CD8-positive, alpha-beta T cell (primary cell): ENCODE measurements at regions of chr22 and their contacts with region 1.

Region 1: GRCh38 chr22:50582562-50583293 is at the start of gene CHKB:
- DNase-seq: peak; percentile 95 to 99 (median 98)
- ATAC-seq: peak; percentile 94
- H3K4me3 ChIP-seq: peak within 1 kb of the TSS; percentile 77 to 78
- H3K4me3 Mint-ChIP-seq: peak within 1 kb of the TSS; percentile 93
- H3K27ac ChIP-seq: peak within 1 kb of the TSS; percentile 93 to 94
- H3K27ac Mint-ChIP-seq: peak within 1 kb of the TSS; percentile 97
- H3K4me1 ChIP-seq: peaks cover 16% of the 10 kb centered on the region
- H3K4me1 Mint-ChIP-seq: peaks cover 30% of the 10 kb centered on the region
- H3K27me3 ChIP-seq: no peaks in the 10 kb centered on the region
- H3K27me3 Mint-ChIP-seq: no peaks in the 10 kb centered on the region
- CTCF ChIP-seq: no peak
- total RNA-seq, gene CHKB: 112 to 115 TPM

Region 2: DNA sequence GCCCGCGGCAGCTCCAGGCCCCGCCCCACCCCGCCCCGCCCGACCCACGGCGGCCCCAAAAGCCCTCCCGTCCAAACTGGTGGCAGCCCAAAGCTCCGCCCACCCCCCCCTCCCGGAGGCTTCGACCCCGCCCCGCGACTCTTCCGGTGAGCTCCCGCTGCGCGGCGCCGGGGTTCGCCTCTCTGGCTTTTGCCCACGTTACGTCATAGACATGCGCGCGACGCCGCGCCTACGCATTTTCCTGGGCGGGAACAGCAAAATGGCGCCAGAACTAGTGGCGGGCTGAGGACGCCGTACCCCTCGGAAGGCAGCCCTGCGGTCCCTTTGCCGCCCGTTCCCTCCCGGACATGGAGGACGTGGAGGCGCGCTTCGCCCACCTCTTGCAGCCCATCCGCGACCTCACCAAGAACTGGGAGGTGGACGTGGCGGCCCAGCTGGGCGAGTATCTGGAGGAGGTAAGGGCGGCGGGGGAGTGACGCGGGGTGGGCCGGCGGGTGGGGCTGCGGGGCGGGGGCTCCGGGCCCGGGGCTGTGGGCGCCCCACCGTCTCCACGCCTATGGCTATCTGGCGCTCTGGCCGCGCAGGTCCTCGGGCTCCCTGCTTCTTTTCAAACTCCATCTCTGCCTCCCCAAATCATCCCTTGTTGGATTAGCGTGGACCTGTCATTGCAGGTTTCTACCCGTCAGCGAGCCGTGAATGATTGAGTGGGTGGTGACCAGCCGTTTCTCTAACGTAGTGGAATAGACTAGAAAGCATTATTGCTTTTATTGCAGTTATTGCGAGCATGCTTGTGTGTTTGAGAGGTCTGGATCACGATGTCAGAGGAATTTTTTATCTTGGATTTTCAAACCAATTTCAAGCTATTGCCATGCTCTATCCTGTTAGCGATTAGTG is 74.5 kb before region 1 on chr22 and contains the start of gene NCAPH2:
- CTCF ChIA-PET with region 1: no interaction called
- POLR2A ChIA-PET with region 1: interaction called, 5 read pairs
- intact Hi-C with region 1: loop called (anchors 1 kb)
- DNase-seq: peak in 8 of 9 experiments; percentile 94 to 99 (median 98)
- ATAC-seq: peak; percentile 74
- H3K4me3 ChIP-seq: peak within 1 kb of the TSS; percentile 88 to 97
- H3K4me3 Mint-ChIP-seq: peak within 1 kb of the TSS; percentile 96
- H3K27ac ChIP-seq: peak within 1 kb of the TSS; percentile 93
- H3K27ac Mint-ChIP-seq: peak within 1 kb of the TSS; percentile 99
- H3K4me1 ChIP-seq: peaks cover 23% of the 10 kb centered on the region
- H3K4me1 Mint-ChIP-seq: peaks cover 26% of the 10 kb centered on the region
- H3K27me3 ChIP-seq: no peaks in the 10 kb centered on the region
- H3K27me3 Mint-ChIP-seq: no peaks in the 10 kb centered on the region
- CTCF ChIP-seq: no peak
- total RNA-seq, gene NCAPH2: 206 to 209 TPM

Region 3: DNA sequence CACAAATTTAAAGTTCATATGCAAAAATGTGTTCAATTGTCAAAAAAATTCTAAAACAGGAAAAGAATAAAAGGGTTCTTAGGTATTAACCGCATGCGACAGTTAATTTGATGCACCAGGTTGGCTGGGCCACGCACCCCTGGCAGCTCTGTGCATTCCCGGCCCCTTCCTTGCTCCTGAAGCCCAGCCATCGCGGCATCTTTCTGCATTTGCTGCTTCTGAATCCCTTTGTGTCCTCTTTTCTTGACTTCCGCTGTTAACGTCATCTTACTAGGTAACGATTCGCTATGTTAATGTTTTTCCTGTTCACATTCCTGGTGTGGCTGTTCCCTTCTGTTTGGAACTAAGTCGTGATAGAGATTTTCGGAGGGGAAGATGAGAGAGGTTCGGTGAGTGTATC is 45.0 kb before region 1 on chr22:
- CTCF ChIA-PET with region 1: no interaction called
- POLR2A ChIA-PET with region 1: interaction called, 13 read pairs
- intact Hi-C with region 1: no loop called
- DNase-seq: no peak
- ATAC-seq: no peak
- H3K4me3 ChIP-seq: no peak overlapping the region
- H3K4me3 Mint-ChIP-seq: peak overlapping the region; percentile 8
- H3K27ac ChIP-seq: peak overlapping the region in 1 of 2 experiments; percentile 97
- H3K27ac Mint-ChIP-seq: peak overlapping the region; percentile 35
- H3K4me1 ChIP-seq: peaks cover 17% of the 10 kb centered on the region
- H3K4me1 Mint-ChIP-seq: peaks cover 28% of the 10 kb centered on the region
- H3K27me3 ChIP-seq: no peaks in the 10 kb centered on the region
- H3K27me3 Mint-ChIP-seq: peaks cover 4% of the 10 kb centered on the region
- CTCF ChIP-seq: no peak